Activated T-helper 2 cell treated with anti-CD3 and anti-CD28 coated beads, Interferon-gamma antibody, Interleukin-2, Interleukin-4, amounts not matched to agents 10 μg/mL and 5 μg/mL and 100 μg/mL, durations not matched to agents 14 hours and 24 hours and 36 hours (primary cell): ENCODE measurements at regions of chr20 and their contacts with region 1.

Region 1: GRCh38 chr20:34111702-34112599 is at the start of gene EIF2S2:
- DNase-seq: peak; percentile 95
- H3K4me3 Mint-ChIP-seq: peak within 1 kb of the TSS; percentile 96
- H3K27ac Mint-ChIP-seq: peak within 1 kb of the TSS; percentile 97
- H3K4me1 Mint-ChIP-seq: peaks cover 36% of the 10 kb centered on the region
- H3K27me3 Mint-ChIP-seq: peaks cover 5% of the 10 kb centered on the region
- total RNA-seq, gene EIF2S2: 96.0 and 97.6 TPM in 2 replicates

Region 2: DNA sequence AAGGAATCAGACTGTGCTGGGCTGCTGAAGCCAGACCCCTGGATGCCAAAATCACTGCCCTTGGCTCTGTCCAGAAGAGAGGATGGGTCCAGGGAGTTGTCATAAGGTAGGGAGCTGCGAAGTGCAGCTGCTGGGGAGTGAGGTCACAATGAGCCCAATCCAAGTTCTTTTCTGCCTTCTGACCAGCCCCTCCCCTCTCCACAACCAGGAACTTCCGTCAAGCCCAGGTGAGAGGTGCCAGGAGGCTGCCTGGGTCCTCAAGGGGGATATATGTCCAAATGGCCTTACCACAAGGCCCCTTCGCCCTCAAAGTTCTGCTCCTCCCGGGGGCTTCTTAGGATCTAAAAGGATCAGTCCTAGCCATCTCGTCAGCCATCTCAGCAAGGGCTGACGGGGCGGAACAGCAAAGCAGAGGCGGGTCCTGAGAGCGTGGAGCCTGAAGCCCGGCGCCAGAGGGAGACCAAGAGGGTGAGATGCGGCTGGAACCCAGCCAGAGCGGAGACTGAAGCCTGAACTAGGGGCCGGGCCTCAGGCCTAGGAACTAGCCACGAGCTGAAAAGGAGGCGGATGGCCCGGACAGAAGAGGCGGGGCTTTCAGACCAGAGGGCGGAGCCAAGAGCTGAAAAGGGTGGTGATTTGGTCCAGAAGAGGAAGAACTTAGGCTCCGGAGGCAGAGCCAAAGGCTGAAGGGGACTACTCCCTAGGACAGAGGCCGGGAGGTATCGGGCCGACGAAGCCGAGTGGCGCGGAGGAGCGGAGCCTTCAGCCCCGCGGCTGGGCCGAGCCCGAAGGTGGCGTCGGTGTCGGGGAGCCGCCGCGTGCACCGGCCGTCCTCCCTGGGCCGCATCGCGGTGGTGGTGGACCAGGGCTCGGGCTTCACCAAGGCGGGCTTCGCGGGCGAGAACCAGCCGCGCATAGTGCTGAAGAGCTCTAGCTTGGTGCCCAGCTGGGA is 445.4 kb before region 1 on chr20 and contains the start of gene ACTL10:
- intact Hi-C with region 1: loop called (anchors 10 kb)
- DNase-seq: peak; percentile 79
- H3K4me3 Mint-ChIP-seq: peak within 1 kb of the TSS; percentile 85
- H3K27ac Mint-ChIP-seq: peak within 1 kb of the TSS; percentile 85
- H3K4me1 Mint-ChIP-seq: peaks cover 24% of the 10 kb centered on the region
- H3K27me3 Mint-ChIP-seq: no peaks in the 10 kb centered on the region
- total RNA-seq, gene ACTL10: 2.6 and 3.3 TPM in 2 replicates

Region 3: GRCh38 chr20:33810885-33811777 is 300.8 kb before region 1 on chr20 and contains the start of gene CHMP4B:
- intact Hi-C with region 1: loop called (anchors 2 kb)
- DNase-seq: peak; percentile 98
- H3K4me3 Mint-ChIP-seq: peak within 1 kb of the TSS; percentile 99
- H3K27ac Mint-ChIP-seq: peak within 1 kb of the TSS; percentile 95
- H3K4me1 Mint-ChIP-seq: peaks cover 38% of the 10 kb centered on the region
- H3K27me3 Mint-ChIP-seq: peaks cover 2% of the 10 kb centered on the region
- total RNA-seq, gene CHMP4B: 113 and 116 TPM in 2 replicates

Region 4: GRCh38 chr20:33992923-33993575 is 118.9 kb before region 1 on chr20:
- intact Hi-C with region 1: loop called (anchors 1 kb)
- DNase-seq: peak; percentile 99
- H3K4me3 Mint-ChIP-seq: peak overlapping the region; percentile 91
- H3K27ac Mint-ChIP-seq: peak overlapping the region; percentile 84
- H3K4me1 Mint-ChIP-seq: peaks cover 40% of the 10 kb centered on the region
- H3K27me3 Mint-ChIP-seq: no peaks in the 10 kb centered on the region

Region 5: GRCh38 chr20:34129518-34130162 is 17.7 kb after region 1 on chr20:
- intact Hi-C with region 1: loop called (anchors 2 kb)
- DNase-seq: peak; percentile 49
- H3K4me3 Mint-ChIP-seq: no peak overlapping the region
- H3K27ac Mint-ChIP-seq: no peak overlapping the region
- H3K4me1 Mint-ChIP-seq: peaks cover 9% of the 10 kb centered on the region
- H3K27me3 Mint-ChIP-seq: peaks cover 14% of the 10 kb centered on the region

Region 6: DNA sequence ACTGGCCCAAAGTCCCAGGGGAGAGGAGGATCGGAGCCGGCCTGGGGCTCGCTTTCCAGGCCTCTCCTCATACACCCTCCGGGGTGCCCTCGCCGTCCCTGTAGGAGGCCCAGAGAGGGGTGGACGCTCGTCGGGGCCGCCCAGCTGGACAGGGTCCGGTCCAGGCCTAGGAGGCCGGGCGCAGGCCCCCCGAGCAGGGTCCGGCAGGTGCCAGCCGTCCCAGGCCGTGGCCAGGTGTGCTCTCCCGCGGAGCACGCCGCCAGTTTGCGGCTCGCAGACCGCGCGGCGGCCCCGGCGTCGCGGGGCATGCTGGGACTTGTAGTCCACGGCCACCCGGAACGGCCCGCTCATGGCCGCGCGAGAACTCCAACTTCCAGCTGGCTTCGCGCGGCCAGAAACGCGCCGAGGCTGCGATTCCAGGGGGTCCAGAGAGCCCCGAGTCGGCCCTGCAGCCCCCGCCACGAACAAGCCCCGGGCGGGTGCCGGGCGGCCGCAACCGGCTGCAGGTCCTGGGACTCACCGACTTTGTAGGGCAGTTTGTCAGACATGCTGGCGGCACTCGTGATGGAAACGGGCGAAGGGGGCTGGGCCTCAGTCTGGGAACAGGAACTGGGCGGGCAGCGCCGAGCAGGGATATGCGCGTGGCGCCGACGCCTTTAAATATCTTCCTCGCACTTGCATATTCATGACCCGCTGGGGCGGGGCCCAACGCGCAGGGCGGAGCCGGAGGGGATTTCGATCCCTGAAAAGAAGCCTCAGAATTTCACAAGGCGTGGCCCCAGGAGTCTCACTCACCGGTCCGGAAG is 191.0 kb after region 1 on chr20 and contains the start of gene AHCY:
- intact Hi-C with region 1: loop called (anchors 1 kb)
- DNase-seq: peak; percentile 93
- H3K4me3 Mint-ChIP-seq: peak within 1 kb of the TSS; percentile 87
- H3K27ac Mint-ChIP-seq: peak within 1 kb of the TSS; percentile 88
- H3K4me1 Mint-ChIP-seq: peaks cover 13% of the 10 kb centered on the region
- H3K27me3 Mint-ChIP-seq: peaks cover 1% of the 10 kb centered on the region
- total RNA-seq, gene AHCY: 120 and 122 TPM in 2 replicates